B cell (primary cell): ENCODE measurements at regions of chr5 and their contacts with region 1.

Region 1: DNA sequence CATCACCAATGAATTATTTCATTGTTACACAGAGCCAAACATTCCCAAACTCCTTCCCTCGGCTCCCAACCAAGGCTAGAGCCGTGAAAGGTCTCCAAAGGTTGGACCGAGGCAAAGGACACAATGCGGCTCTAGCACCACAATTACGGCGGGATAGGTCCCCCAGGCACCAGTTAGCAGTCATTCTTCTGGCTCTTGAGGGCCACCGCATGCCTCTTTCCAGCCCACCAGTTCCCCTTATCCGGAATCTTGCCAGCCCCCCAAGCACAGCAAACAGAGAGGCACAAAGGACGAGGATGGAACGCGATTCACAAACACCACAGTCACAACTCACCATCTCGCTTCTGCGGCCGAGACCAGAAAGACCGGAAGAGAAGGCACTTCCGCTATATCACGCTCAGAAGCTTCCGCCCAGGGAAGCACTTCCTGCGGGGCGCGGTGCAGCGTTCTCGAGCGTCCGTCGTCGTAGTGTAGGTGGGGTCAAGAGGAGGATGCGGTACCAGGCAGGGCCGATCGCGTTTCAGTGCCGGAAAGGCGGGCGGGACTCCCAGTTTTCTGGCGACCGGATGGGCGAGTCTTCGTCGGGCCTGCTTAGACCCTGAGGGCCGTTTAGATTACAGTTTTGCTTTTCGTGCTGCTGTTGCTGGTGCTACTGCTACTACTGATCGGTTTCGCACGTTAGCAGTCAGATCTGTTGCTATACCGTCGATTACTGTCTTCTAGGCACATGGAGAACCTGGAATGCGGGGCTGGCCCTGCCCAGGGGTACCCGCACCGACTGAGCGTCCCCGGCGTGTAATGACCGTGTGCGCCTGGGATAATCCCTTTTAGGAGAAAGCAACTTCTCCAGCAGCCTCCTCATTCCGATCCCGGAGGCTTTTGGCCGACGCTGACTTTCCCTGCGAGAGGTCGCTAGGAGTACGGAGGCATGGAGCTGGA is at the start of gene RPL37:
- DNase-seq: peak; percentile 95
- ATAC-seq: peak; percentile 98
- H3K4me3 ChIP-seq: peak within 1 kb of the TSS; percentile 74 to 99 (median 89)
- H3K4me3 Mint-ChIP-seq: peak within 1 kb of the TSS; percentile 99
- H3K27ac ChIP-seq: peak within 1 kb of the TSS; percentile 85 to 91
- H3K27ac Mint-ChIP-seq: peak within 1 kb of the TSS; percentile 98
- H3K4me1 ChIP-seq: peaks cover 21 to 23% of the 10 kb centered on the region in 2 donors
- H3K4me1 Mint-ChIP-seq: peaks cover 43% of the 10 kb centered on the region
- H3K27me3 ChIP-seq: no peaks in the 10 kb centered on the region
- H3K27me3 Mint-ChIP-seq: no peaks in the 10 kb centered on the region
- CTCF ChIP-seq: no peak
- total RNA-seq, gene RPL37: 1,932 and 2,240 TPM in 2 replicates

Region 2: DNA sequence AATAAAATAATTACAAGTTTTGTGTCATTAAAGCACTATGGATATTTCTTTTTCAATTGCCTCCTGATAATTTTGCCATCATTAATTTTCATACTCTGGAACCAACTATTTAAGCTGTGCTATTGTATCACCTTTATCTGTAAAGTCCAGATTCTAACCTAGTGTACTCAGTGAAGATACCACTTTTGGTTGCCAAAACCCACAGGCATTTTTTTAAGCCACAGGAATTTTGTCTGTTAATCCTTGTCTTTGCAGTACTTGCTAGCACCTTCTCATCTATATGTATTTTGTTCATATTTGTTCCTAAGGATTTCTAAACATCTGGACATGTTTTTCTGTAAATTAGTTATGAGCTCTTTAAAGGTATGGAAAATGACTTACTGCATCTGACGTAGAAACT is 929.0 kb before region 1 on chr5:
- CTCF ChIA-PET with region 1: no interaction called
- POLR2A ChIA-PET with region 1: no interaction called
- intact Hi-C with region 1: no loop called
- DNase-seq: no peak
- ATAC-seq: no peak
- H3K4me3 ChIP-seq: no peak overlapping the region
- H3K4me3 Mint-ChIP-seq: no peak overlapping the region
- H3K27ac ChIP-seq: no peak overlapping the region
- H3K27ac Mint-ChIP-seq: no peak overlapping the region
- H3K4me1 ChIP-seq: no peaks in the 10 kb centered on the region
- H3K4me1 Mint-ChIP-seq: no peaks in the 10 kb centered on the region
- H3K27me3 ChIP-seq: no peaks in the 10 kb centered on the region
- H3K27me3 Mint-ChIP-seq: no peaks in the 10 kb centered on the region
- CTCF ChIP-seq: no peak

Region 3: GRCh38 chr5:40798012-40798855 is 36.9 kb before region 1 on chr5 and contains the start of gene PRKAA1:
- CTCF ChIA-PET with region 1: interaction called, 6 read pairs
- POLR2A ChIA-PET with region 1: interaction called, 5 read pairs
- intact Hi-C with region 1: loop called (anchors 1 kb)
- DNase-seq: peak; percentile 93
- ATAC-seq: peak; percentile 95
- H3K4me3 ChIP-seq: peak within 1 kb of the TSS; percentile 68 to 98 (median 82)
- H3K4me3 Mint-ChIP-seq: peak within 1 kb of the TSS; percentile 82
- H3K27ac ChIP-seq: peak within 1 kb of the TSS; percentile 87 to 94
- H3K27ac Mint-ChIP-seq: peak within 1 kb of the TSS; percentile 94
- H3K4me1 ChIP-seq: peaks cover 15 to 23% of the 10 kb centered on the region in 2 donors
- H3K4me1 Mint-ChIP-seq: peaks cover 39% of the 10 kb centered on the region
- H3K27me3 ChIP-seq: no peaks in the 10 kb centered on the region
- H3K27me3 Mint-ChIP-seq: no peaks in the 10 kb centered on the region
- CTCF ChIP-seq: peak; percentile 81
- total RNA-seq, gene PRKAA1: 103 and 107 TPM in 2 replicates

Region 4: DNA sequence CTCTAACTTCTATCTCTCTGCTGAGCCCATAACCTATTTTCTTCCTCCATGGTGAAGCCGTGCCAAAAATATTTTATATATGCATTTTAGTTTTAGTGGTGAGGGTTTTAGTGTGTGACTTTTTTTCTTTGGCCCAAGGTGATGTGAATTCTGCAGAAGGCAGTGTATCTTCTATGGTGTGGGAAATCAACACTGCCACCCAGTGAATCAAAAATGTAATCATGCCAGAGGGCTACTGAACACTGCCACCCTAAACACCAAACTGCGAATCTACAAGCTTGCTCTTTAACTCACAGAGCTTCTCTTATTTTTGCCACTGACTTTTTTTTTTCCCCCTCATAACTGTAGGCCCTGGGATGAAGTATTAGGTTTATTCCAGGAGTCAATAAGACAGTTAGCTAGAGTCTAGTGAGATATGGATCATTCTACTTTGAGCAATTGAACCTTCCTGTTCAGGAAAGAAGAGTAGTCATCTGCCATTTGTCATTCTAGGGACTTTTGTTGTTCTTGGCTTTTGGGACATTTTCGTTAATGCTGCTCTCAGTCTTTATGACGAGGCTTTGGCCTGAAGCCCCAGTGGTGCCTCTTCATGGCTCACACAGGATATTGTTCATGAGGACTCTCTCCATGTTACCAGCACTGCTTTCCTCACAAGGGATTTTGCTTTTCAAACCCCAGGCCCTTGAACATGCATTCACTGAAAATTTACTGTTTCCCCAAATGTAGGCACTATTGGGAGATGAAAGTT is 127.3 kb after region 1 on chr5:
- CTCF ChIA-PET with region 1: no interaction called
- POLR2A ChIA-PET with region 1: no interaction called
- intact Hi-C with region 1: no loop called
- DNase-seq: no peak
- ATAC-seq: no peak
- H3K4me3 ChIP-seq: no peak overlapping the region
- H3K4me3 Mint-ChIP-seq: no peak overlapping the region
- H3K27ac ChIP-seq: no peak overlapping the region
- H3K27ac Mint-ChIP-seq: no peak overlapping the region
- H3K4me1 ChIP-seq: no peaks in the 10 kb centered on the region
- H3K4me1 Mint-ChIP-seq: no peaks in the 10 kb centered on the region
- H3K27me3 ChIP-seq: no peaks in the 10 kb centered on the region
- H3K27me3 Mint-ChIP-seq: no peaks in the 10 kb centered on the region
- CTCF ChIP-seq: no peak